Activated T-helper 1 cell treated with anti-CD3 and anti-CD28 coated beads, Interleukin-12 subunit alpha, Interleukin-12 subunit beta, Interleukin-2, Interleukin-4 antibody, amounts not matched to agents 30 ng/mL and 10 ng/mL and 1 ng/mL, durations not matched to agents 14 hours and 24 hours and 36 hours (primary cell): ENCODE measurements at regions of chr3 and their contacts with region 1.

Region 1: GRCh38 chr3:186540221-186540834 is 3.9 kb downstream of the CRYGS start:
- DNase-seq: peak; percentile 76
- H3K4me3 Mint-ChIP-seq: no peak overlapping the region
- H3K27ac Mint-ChIP-seq: no peak overlapping the region
- H3K4me1 Mint-ChIP-seq: peaks cover 55% of the 10 kb centered on the region
- H3K27me3 Mint-ChIP-seq: no peaks in the 10 kb centered on the region

Region 2: DNA sequence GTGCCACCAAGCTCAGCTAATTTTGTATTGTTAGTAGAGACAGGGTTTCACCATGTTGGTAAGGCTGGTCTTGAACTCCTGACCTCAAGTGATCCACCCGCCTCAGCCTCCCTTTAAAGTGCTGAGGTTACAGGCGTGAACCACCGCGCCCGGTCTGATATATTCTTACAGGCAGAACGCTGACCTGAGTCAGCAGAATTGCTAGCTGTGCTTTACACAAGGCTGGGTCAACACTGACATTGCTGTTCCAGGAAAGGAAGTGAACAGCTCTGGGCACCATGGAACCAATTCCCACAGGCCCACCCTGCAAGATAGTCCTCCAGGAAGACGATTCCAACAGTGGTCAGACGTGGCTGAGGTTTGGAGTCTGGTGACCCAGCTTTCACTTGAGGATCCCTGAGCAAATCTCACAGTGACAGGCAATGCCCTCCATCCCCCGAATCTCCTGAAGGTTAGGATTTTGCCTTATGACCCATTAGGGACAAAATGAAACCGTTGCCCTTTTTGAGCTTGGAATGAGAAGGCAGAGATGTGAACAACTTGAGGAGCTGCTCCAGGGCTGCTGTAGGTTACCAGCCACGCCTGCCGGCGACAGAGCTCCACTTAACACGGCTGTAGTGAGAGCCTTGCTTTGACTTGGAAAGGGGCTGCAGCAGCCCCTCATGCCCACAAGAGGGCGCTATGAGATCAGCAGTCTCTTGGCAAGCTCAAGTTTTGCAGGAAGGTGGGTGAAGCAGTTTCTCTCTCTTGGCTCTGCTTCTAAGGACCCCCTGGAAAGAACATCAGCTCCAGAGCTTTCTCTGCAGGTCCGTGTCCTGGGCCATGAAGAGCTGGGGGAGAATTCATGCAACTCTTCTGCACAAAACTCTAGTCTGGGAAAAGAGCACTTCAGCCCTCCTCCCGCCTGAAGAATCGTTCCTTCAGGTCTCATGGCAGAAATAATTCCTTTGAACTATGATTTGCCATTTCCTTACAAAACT is 880.1 kb before region 1 on chr3:
- intact Hi-C with region 1: loop called (anchors 2 kb)
- DNase-seq: peak; percentile 51
- H3K4me3 Mint-ChIP-seq: no peak overlapping the region
- H3K27ac Mint-ChIP-seq: no peak overlapping the region
- H3K4me1 Mint-ChIP-seq: no peaks in the 10 kb centered on the region
- H3K27me3 Mint-ChIP-seq: peaks cover 7% of the 10 kb centered on the region

Region 3: GRCh38 chr3:185942907-185943759 is 597.2 kb before region 1 on chr3:
- intact Hi-C with region 1: loop called (anchors 2 kb)
- DNase-seq: peak; percentile 78
- H3K4me3 Mint-ChIP-seq: no peak overlapping the region
- H3K27ac Mint-ChIP-seq: no peak overlapping the region
- H3K4me1 Mint-ChIP-seq: peaks cover 23% of the 10 kb centered on the region
- H3K27me3 Mint-ChIP-seq: peaks cover 17% of the 10 kb centered on the region